ENCODE measurements at regions of chr3 and their contacts with region 1.

Region 1: GRCh38 chr3:23916886-23917678 is at the starts of genes NKIRAS1 and RPL15:
- DNase-seq: peak; percentile 94 to 98 (median 97)
- ATAC-seq: peak; percentile 93
- H3K4me3 ChIP-seq: peak within 1 kb of the TSS; percentile 89 to 95
- H3K4me3 Mint-ChIP-seq: peak within 1 kb of the TSS; percentile 99
- H3K27ac ChIP-seq: peak within 1 kb of the TSS; percentile 88
- H3K27ac Mint-ChIP-seq: peak within 1 kb of the TSS; percentile 97
- H3K4me1 ChIP-seq: peaks cover 38% of the 10 kb centered on the region
- H3K4me1 Mint-ChIP-seq: peaks cover 55% of the 10 kb centered on the region
- H3K27me3 ChIP-seq: no peaks in the 10 kb centered on the region
- H3K27me3 Mint-ChIP-seq: no peaks in the 10 kb centered on the region
- CTCF ChIP-seq: peak; percentile 22
- total RNA-seq, gene NKIRAS1: 4.5 to 6.2 TPM
- total RNA-seq, gene RPL15: 2,460 to 2,470 TPM

Region 2: GRCh38 chr3:23461069-23461468 is 456.0 kb before region 1 on chr3:
- CTCF ChIA-PET with region 1: no interaction called
- POLR2A ChIA-PET with region 1: no interaction called
- intact Hi-C with region 1: no loop called
- DNase-seq: no peak
- ATAC-seq: no peak
- H3K4me3 ChIP-seq: no peak overlapping the region
- H3K4me3 Mint-ChIP-seq: no peak overlapping the region
- H3K27ac ChIP-seq: no peak overlapping the region
- H3K27ac Mint-ChIP-seq: no peak overlapping the region
- H3K4me1 ChIP-seq: peaks cover 7% of the 10 kb centered on the region
- H3K4me1 Mint-ChIP-seq: peaks cover 14% of the 10 kb centered on the region
- H3K27me3 ChIP-seq: no peaks in the 10 kb centered on the region
- H3K27me3 Mint-ChIP-seq: no peaks in the 10 kb centered on the region
- CTCF ChIP-seq: no peak

Region 3: DNA sequence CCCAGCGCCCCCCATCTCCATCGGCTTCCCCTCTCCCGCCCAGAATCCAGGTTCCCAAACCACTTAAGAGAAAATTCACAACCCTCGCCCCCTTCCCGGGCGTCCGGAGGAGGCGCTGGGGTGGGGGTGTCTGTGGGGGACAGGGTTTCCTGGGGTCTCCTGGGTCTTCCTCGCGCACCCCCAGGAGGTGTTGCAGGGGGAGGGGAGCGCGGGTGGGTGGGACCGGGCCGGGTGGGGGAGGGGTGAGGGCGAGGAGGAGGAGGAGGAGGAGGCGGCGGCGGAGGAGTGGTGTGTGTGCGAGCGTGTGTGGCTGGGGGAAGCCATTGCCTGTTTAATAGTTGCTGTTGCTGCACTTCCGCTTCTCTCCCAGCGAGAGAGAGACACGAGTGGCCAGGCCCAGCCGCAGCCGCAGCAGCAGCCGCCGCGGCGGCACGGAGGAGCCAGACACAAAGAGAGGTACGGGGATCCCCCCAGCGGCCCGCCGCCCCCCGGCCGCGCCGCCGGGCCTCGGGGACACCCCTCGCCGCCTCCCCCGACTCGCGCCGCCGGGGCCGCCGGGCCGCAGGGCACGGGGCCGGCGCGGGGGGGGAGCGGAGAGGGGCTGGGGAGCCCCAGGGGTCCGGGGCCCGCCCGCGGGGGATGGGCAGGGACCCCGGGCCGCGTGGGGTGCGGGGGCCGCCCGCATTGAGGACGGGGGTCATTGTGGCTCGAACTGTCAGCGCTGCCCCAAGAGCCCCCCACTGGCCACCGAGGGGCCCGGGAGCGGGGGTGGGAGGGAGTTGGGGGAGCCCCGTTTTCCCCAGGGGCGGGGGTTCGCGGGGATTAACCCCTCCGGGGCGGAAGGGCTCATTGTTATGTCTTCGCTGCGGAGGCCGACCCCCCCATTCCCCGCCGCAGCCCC is 111.2 kb before region 1 on chr3 and contains the start of gene UBE2E1:
- CTCF ChIA-PET with region 1: no interaction called
- POLR2A ChIA-PET with region 1: interaction called, 7 read pairs
- intact Hi-C with region 1: loop called (anchors 1 to 2 kb)
- DNase-seq: peak; percentile 53 to 92 (median 72)
- ATAC-seq: peak; percentile 82
- H3K4me3 ChIP-seq: peak within 1 kb of the TSS; percentile 59 to 63
- H3K4me3 Mint-ChIP-seq: peak within 1 kb of the TSS; percentile 97
- H3K27ac ChIP-seq: peak within 1 kb of the TSS; percentile 28 to 33
- H3K27ac Mint-ChIP-seq: peak within 1 kb of the TSS; percentile 98
- H3K4me1 ChIP-seq: peaks cover 27% of the 10 kb centered on the region
- H3K4me1 Mint-ChIP-seq: peaks cover 47% of the 10 kb centered on the region
- H3K27me3 ChIP-seq: no peaks in the 10 kb centered on the region
- H3K27me3 Mint-ChIP-seq: no peaks in the 10 kb centered on the region
- CTCF ChIP-seq: no peak
- total RNA-seq, gene UBE2E1: 39.8 to 40.6 TPM

Region 4: DNA sequence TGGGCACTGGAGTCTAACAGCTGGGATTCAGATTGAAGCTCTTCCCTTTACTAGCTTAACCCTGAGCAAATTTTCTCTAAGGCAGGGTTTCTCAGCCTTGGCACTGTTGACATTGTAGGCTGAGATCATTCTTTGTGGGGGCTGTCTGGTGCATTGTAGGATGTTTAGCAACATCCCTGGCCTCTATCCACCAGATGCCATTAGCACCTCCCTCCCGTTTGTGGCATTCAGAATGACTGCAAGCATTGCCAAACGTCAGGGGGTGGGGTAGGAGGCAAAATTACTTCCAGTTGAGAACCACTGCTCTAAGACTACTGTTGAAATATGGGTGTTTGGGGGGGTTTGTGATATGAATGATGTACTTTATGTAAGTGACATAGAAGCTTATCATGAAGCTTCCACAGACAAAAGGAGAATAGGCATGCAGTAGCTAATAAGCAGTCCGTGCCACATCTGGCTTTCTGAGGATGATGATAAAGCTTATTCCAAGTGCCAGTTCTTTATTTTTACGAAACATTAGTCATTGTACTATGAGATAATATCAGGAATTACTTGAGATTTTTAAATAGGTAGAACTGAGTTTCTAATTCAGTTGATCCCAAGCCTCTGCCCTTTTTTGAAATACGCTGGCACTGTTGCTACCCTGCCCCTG is 39.6 kb before region 1 on chr3:
- CTCF ChIA-PET with region 1: no interaction called
- POLR2A ChIA-PET with region 1: no interaction called
- intact Hi-C with region 1: no loop called
- DNase-seq: no peak
- ATAC-seq: no peak
- H3K4me3 ChIP-seq: no peak overlapping the region
- H3K4me3 Mint-ChIP-seq: no peak overlapping the region
- H3K27ac ChIP-seq: no peak overlapping the region
- H3K27ac Mint-ChIP-seq: peak overlapping the region; percentile 39
- H3K4me1 ChIP-seq: peaks cover 15% of the 10 kb centered on the region
- H3K4me1 Mint-ChIP-seq: peaks cover 65% of the 10 kb centered on the region
- H3K27me3 ChIP-seq: no peaks in the 10 kb centered on the region
- H3K27me3 Mint-ChIP-seq: no peaks in the 10 kb centered on the region
- CTCF ChIP-seq: no peak

Region 5: DNA sequence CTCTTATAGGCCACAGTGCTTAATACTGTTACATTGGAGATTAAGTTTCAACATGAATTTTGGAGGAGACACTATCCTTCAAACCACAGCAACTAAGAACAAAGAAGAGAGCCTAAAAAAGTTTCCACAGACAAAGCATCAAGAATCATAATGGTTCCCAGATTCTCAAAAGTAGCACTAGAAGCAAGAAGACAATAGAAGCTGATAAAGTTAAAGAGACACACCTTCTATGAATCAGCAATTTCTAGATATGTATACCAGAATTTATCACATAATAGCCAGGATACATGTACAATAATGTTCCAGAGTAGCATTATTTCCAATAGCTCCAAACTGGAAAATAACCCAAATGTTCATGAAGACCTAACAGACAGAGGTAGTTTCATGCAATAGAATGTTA is 12.5 kb before region 1 on chr3:
- CTCF ChIA-PET with region 1: no interaction called
- POLR2A ChIA-PET with region 1: interaction called, 10 read pairs
- intact Hi-C with region 1: no loop called
- DNase-seq: no peak
- ATAC-seq: no peak
- H3K4me3 ChIP-seq: no peak overlapping the region
- H3K4me3 Mint-ChIP-seq: no peak overlapping the region
- H3K27ac ChIP-seq: no peak overlapping the region
- H3K27ac Mint-ChIP-seq: no peak overlapping the region
- H3K4me1 ChIP-seq: no peaks in the 10 kb centered on the region
- H3K4me1 Mint-ChIP-seq: no peaks in the 10 kb centered on the region
- H3K27me3 ChIP-seq: no peaks in the 10 kb centered on the region
- H3K27me3 Mint-ChIP-seq: no peaks in the 10 kb centered on the region
- CTCF ChIP-seq: no peak

Region 6: DNA sequence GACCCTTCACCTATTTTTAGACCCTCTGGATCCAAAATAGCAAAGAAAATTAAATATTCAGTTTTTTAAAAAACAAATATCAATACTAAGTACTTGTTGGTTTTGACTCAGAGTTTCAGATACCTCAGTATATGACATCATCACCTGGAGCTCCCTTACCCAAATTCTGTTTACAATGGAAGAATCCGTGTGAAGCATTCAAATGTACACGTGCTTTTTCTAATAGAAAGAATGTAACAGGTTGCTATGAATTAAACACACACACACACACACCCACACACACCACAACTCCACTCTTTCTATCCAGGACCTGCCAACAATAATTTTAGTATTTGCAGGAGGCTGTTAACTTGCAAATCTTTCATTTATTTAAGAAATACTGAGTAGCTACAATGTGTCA is 355.8 kb after region 1 on chr3:
- CTCF ChIA-PET with region 1: no interaction called
- POLR2A ChIA-PET with region 1: no interaction called
- intact Hi-C with region 1: no loop called
- DNase-seq: no peak
- ATAC-seq: no peak
- H3K4me3 ChIP-seq: no peak overlapping the region
- H3K4me3 Mint-ChIP-seq: no peak overlapping the region
- H3K27ac ChIP-seq: no peak overlapping the region
- H3K27ac Mint-ChIP-seq: no peak overlapping the region
- H3K4me1 ChIP-seq: no peaks in the 10 kb centered on the region
- H3K4me1 Mint-ChIP-seq: no peaks in the 10 kb centered on the region
- H3K27me3 ChIP-seq: no peaks in the 10 kb centered on the region
- H3K27me3 Mint-ChIP-seq: peaks cover 8% of the 10 kb centered on the region
- CTCF ChIP-seq: no peak

Region 7: DNA sequence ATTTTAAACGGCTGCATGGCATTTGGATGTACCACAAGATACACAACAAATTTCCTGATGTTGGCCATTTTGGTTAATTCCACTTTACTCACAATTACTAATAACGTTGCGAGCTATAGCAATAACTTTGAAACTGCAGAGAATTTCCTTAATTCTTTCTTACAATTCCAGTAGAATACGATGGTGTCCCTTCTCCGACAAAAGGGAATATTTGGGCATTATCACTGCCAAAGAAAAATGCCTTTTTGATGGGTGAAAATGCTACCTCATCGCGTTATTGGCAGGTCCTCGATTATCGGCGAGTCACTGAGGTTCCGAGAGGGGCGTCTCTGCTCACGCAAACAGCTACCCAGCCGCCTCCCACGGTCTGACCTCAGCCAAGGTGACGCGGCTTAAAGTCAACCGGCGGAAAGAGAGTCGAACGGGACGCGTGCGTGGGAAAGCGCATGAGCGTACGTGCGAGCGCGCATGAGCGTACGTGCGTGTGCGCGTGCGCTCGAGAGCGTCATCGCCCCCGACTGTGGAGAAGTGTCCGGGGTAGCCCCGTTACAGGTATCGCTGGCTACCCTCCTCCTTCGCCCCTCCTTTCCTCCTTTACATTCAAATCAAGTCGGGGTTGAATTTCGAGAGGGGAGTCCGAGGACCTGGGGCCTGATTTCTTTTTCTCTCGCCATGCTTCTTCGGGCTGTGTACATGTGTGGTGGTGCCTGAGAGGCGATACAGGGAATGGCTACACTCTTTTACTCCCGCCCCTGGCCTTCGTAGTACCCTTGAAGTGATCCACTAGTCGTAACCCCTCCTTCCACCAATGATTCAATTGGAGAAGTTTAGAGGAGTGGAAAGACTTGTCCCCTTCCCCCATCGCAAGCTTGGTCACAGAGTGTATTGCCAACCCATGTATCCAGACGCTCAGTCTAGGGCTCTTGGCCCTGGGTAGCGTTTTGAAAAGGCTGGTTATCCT is 1872.8 kb after region 1 on chr3 and contains the start of gene OXSM:
- CTCF ChIA-PET with region 1: no interaction called
- POLR2A ChIA-PET with region 1: no interaction called
- intact Hi-C with region 1: loop called in 1 of 2 experiments (anchors 10 kb)
- DNase-seq: peak; percentile 75 to 98 (median 89)
- ATAC-seq: peak; percentile 93
- H3K4me3 ChIP-seq: peak within 1 kb of the TSS; percentile 64 to 65
- H3K4me3 Mint-ChIP-seq: peak within 1 kb of the TSS; percentile 97
- H3K27ac ChIP-seq: peak within 1 kb of the TSS; percentile 85 to 87
- H3K27ac Mint-ChIP-seq: peak within 1 kb of the TSS; percentile 98
- H3K4me1 ChIP-seq: peaks cover 18% of the 10 kb centered on the region
- H3K4me1 Mint-ChIP-seq: peaks cover 54% of the 10 kb centered on the region
- H3K27me3 ChIP-seq: no peaks in the 10 kb centered on the region
- H3K27me3 Mint-ChIP-seq: no peaks in the 10 kb centered on the region
- CTCF ChIP-seq: no peak
- total RNA-seq, gene OXSM: 4.0 to 5.9 TPM